PC-9 (cell line): ENCODE measurements at regions of chr12 and their contacts with region 1.

Region 1: GRCh38 chr12:78120866-78121560 is 290.3 kb downstream of the NAV3 start:
- DNase-seq: peak in 1 of 2 experiments; percentile 40
- H3K4me3 ChIP-seq: no peak overlapping the region
- H3K27ac ChIP-seq: no peak overlapping the region
- H3K4me1 ChIP-seq: no peaks in the 10 kb centered on the region
- H3K27me3 ChIP-seq: no peaks in the 10 kb centered on the region
- CTCF ChIP-seq: peak; percentile 68

Region 2: DNA sequence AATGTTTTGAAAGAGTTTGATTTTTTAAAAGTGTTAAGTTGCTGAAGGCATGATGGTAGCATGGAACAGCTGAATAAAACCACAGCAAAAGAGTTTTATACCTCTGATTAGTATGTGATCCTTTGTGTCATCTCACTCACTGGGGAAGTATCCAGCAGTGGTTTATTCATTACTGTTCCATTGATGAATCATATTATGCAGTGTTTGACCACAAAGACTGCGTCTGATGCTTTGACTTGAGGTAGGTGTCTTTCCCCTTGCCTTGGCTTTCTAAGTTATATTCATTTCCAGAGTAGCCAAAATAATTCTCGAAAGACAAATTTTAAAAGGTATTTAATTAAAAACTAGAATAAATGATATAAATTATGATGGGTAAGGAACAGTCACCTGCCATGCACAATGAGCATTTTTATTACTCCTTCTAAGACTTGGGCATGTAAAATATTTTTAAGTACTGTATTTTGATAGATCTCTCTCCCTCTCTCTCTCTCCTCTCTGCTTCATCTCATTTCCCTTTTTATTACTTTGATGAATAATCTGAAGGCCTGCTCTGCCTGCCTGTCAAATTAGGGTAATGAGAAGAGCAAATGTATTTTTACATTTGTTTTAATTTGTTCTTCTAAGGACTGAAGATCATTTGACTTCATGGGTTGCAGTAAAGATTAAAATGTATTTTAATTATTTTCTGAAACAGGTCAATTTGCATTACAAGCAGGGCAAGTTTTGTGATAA is 125.4 kb before region 1 on chr12:
- CTCF ChIA-PET with region 1: no interaction called
- POLR2A ChIA-PET with region 1: no interaction called
- intact Hi-C with region 1: loop called (anchors 2 kb)
- DNase-seq: no peak
- H3K4me3 ChIP-seq: no peak overlapping the region
- H3K27ac ChIP-seq: no peak overlapping the region
- H3K4me1 ChIP-seq: no peaks in the 10 kb centered on the region
- H3K27me3 ChIP-seq: no peaks in the 10 kb centered on the region
- CTCF ChIP-seq: no peak